ENCODE measurements at regions of chr10 and their contacts with region 1.

Region 1: GRCh38 chr10:103712570-103713498 is 142.5 kb downstream of the SH3PXD2A start:
- DNase-seq: peak; percentile 81
- H3K4me3 ChIP-seq: no peak overlapping the region
- H3K27ac ChIP-seq: no peak overlapping the region
- H3K4me1 ChIP-seq: no peaks in the 10 kb centered on the region
- CTCF ChIP-seq: peak; percentile 96

Region 2: DNA sequence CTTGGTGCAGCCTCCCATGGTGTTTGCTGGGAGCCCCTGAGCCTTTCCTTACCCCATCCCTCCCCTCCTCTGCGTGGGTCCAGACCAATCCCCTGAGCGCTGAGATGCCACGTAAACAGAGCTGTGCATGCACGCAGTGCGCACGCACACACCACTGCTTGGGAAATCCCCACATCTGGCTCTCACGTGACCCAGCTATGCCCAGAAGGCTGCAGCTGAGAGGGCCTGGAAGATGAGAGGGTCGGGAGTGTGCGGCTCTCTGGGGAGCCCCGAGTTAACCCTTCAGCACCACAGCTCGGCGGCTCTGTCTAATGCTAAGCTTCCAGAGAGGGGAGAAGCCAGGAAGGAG is 34.7 kb before region 1 on chr10:
- CTCF ChIA-PET with region 1: no interaction called
- POLR2A ChIA-PET with region 1: no interaction called
- intact Hi-C with region 1: no loop called
- DNase-seq: peak; percentile 95
- H3K4me3 ChIP-seq: peak overlapping the region; percentile 63
- H3K27ac ChIP-seq: peak overlapping the region; percentile 45
- H3K4me1 ChIP-seq: peaks cover 36% of the 10 kb centered on the region
- CTCF ChIP-seq: no peak

Region 3: GRCh38 chr10:103772096-103772845 is 59.4 kb after region 1 on chr10:
- CTCF ChIA-PET with region 1: no interaction called
- POLR2A ChIA-PET with region 1: no interaction called
- intact Hi-C with region 1: loop called (anchors 5 kb)
- DNase-seq: peak; percentile 78
- H3K4me3 ChIP-seq: peak overlapping the region; percentile 58
- H3K27ac ChIP-seq: peak overlapping the region; percentile 1
- H3K4me1 ChIP-seq: peaks cover 33% of the 10 kb centered on the region
- CTCF ChIP-seq: no peak

Region 4: DNA sequence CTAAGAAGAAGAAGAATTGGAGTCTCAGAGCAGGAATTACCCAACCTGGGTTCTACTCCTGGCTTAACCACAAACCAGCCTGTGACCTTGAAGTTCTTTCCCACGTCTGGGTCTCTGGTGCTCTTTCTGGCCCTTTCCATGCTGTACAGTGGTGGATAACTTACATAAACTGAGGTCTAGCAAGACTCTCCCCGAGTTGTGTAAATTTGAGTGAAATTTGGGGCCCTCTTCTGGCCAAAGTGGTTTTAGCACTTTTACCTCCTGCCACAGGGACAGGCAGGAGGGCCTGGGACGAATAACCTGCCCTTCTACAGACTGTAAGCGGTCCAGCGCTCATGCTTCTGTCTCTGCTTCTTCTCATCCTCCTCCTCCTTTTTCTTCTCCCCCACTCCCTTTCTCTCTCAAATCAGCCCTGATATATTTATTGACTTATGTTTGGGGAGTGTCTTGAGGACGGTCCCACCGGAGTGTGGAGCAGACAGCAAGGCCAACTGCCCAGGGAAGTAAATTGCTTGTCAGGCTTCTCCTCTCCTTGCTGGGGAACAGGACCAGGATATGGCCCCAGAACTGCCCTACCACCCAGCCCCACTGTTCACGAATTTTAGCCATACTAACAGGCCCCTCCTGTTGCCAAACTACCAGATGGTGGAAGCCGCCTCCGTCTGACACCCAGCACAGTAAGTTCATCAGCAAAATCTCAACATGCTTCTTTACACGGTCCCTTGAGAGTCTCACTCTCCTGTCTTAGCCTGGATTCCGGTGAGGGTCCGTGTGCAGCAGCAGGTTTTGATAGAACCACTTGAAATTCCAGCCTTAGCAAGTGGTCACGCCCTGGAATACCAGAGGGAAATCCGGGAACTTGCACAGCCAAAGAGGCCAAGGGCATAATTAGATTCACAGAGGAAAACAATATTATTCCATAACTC is 146.6 kb after region 1 on chr10:
- CTCF ChIA-PET with region 1: no interaction called
- POLR2A ChIA-PET with region 1: no interaction called
- intact Hi-C with region 1: loop called (anchors 1 kb)
- DNase-seq: peak; percentile 72
- H3K4me3 ChIP-seq: no peak overlapping the region
- H3K27ac ChIP-seq: no peak overlapping the region
- H3K4me1 ChIP-seq: peaks cover 2% of the 10 kb centered on the region
- CTCF ChIP-seq: peak; percentile 85

Region 5: DNA sequence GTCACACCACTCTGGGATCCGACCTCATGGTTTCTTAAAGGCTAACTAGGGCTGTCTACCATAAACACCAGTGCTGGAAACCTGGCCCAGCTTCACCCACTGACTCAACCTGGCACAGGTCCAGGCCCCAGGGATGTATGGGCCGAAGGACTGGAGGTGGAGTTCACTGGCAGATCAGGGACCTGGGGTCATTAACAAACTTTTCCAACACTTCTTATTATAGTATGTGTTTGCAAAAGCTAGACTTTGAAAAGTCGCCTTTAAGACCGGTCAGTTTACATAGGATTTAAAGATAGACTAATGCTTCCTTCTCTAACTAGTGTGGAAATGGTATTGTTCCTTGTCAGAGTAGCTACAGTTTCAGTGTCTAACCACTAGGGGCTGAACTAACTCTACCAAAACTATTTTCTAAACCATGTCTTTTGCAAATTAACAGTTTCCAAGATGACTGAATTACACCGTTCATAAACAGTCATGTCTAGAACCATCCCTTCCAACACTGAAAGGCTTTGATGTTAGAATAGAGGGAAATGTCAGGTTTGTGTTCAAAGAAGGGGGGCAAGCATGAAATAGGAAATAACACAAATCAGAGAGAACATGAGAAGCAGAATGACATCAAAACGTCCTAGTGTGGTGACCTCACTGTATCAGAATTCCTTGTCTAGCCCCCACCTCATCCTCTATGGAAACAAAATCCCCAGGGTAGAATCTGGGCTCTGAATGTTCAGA is 175.4 kb after region 1 on chr10:
- CTCF ChIA-PET with region 1: interaction called, 3 read pairs
- POLR2A ChIA-PET with region 1: interaction called, 3 read pairs
- intact Hi-C with region 1: loop called (anchors 1 kb)
- DNase-seq: peak; percentile 53
- H3K4me3 ChIP-seq: no peak overlapping the region
- H3K27ac ChIP-seq: no peak overlapping the region
- H3K4me1 ChIP-seq: no peaks in the 10 kb centered on the region
- CTCF ChIP-seq: peak; percentile 99

Region 6: GRCh38 chr10:104368381-104368780 is 655.5 kb after region 1 on chr10:
- CTCF ChIA-PET with region 1: no interaction called
- POLR2A ChIA-PET with region 1: no interaction called
- intact Hi-C with region 1: no loop called
- DNase-seq: no peak
- H3K4me3 ChIP-seq: no peak overlapping the region
- H3K27ac ChIP-seq: no peak overlapping the region
- H3K4me1 ChIP-seq: no peaks in the 10 kb centered on the region
- CTCF ChIP-seq: no peak

Measured in OCI-LY7 (cell line).